ENCODE measurements at regions of chr3 and their contacts with region 1.

Region 1: DNA sequence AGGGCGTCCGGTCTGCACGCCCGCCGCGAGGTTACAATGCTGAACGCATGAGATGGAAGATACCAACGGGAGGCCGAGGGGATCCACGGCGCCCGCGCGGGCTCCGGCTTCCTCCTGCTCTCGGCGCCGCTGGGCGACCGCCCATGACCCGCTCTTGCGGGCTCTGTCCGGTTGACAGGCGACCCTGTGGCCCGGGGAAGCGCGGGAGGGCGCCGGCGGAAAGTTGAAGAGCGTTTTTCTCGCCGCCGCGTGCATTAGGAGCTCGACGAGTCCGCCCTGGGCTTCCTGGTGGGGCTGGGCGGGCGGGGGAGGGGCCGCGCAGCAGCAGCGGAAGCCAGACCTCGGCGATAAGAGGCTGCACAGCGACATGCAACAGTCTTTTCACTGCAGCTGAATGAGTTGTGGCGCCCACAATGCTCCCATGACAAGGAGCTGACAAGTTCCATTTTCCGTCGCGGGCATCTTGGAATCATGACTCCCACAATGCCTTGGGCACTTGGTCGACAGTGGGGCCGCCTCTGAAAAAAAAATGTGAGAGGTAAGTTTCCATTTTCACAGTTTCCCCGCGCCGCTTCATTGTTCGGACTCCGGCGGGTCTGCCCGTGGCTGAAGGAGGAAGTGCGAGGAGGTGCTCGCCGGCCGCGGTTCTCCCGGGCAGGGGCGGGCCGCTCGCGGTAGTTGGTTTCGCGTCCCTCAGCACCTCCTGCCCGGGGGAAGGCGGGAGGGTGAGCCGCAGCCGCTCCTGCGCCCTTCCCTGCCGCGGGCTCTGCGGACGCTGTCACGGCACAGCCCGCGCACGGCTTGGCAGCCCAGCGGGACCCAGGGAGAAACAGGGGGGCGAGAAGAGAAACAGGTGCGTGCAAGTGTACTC is at the start of gene MBNL1:
- DNase-seq: peak; percentile 82 to 85
- ATAC-seq: peak; percentile 72 to 89 (median 80)
- H3K4me3 ChIP-seq: peak within 1 kb of the TSS; percentile 66 to 97 (median 81)
- H3K27ac ChIP-seq: peak within 1 kb of the TSS; percentile 95 to 100 (median 98)
- H3K4me1 ChIP-seq: peaks cover 9 to 74% (median 57%) of the 10 kb centered on the region in 9 donors
- H3K27me3 ChIP-seq: no peaks in the 10 kb centered on the region
- CTCF ChIP-seq: peak in 1 of 9 donors; percentile 13
- total RNA-seq, gene MBNL1: 173 to 236 (median 190) TPM

Region 2: DNA sequence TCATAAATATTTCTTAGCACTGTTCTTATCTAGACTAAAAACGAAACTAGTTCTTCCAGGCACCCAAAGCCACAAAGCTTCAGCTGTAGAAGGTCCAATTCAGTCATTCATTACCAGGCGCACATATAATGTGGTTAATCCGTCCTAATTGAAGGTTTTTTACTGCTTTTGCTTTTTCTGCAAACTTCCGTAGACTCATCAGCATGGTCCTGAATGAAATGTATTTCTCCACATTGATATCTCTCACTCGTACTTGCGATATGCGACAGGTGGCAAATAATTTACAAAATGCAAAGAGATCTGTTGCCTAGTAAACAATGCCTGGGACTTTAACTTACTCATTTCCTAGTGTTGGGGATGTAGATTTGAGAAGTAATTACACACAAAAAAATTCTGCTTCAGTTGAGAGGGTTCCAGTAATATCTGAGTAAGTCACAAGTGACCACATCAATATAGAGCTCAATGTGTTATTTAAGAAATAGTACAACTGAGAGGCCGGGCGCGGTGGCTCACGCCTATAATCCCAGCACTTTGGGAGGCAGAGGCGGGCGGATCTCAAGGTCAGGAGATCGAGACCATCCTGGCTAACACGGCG is 75.0 kb before region 1 on chr3:
- intact Hi-C with region 1: loop called in 2 of 10 experiments (anchors 5 to 10 kb)
- DNase-seq: no peak
- ATAC-seq: peak in 1 of 8 donors; percentile 33
- H3K4me3 ChIP-seq: peak overlapping the region in 1 of 10 donors; percentile 34
- H3K27ac ChIP-seq: peak overlapping the region in 1 of 10 donors; percentile 74
- H3K4me1 ChIP-seq: peaks cover 0 to 62% (median 8%) of the 10 kb centered on the region in 9 donors
- H3K27me3 ChIP-seq: no peaks in the 10 kb centered on the region
- CTCF ChIP-seq: no peak

Region 3: GRCh38 chr3:152302521-152303021 is 33.8 kb after region 1 on chr3:
- intact Hi-C with region 1: loop called in 3 of 10 experiments (anchors 1 to 5 kb)
- DNase-seq: peak; percentile 30 to 68
- ATAC-seq: peak; percentile 36 to 84 (median 72)
- H3K4me3 ChIP-seq: peak overlapping the region in 9 of 10 donors; percentile 2 to 52 (median 49)
- H3K27ac ChIP-seq: peak overlapping the region; percentile 68 to 89 (median 86)
- H3K4me1 ChIP-seq: peaks cover 7 to 98% (median 91%) of the 10 kb centered on the region in 9 donors
- H3K27me3 ChIP-seq: no peaks in the 10 kb centered on the region
- CTCF ChIP-seq: no peak

Region 4: DNA sequence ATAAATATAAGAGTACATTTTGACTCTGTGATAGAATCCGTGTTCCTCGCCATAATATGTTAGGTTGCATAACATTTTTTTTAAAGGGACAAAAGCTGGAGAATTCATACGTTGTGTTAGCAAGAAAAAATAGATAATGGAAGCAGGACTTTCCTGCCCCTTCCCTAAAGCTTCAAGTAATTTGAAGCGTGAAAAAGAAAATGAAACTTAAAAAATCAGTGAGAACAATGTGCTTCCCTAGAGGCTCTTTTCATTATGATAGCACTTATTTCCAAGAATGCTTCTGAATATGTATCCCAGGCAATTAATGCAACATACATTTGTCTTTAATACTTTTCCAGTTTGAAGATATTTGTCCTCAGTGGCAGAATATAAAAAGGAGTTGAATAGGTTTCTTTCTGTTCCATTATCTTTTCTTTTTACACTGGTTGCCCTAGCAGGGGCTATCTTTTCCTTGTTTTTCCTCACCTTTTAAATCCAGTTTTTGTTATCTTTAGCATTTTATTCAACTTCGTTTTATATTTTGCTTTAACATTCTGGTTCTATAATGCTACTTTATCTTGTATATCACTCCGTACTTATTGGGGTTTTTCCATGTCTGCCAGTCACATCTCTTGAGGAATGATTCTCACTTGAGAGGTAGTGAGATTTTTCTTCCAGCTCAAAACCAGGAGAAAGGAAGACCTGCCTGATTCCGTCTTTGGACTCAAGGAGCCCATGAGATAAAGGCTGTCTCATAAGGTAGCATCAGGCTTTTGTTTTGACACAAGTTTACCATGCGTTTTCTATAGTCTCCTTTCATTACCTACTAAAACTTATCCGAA is 113.7 kb after region 1 on chr3:
- intact Hi-C with region 1: loop called in 1 of 10 experiments (anchors 2 kb)
- DNase-seq: no peak
- ATAC-seq: peak in 7 of 8 donors; percentile 15 to 51 (median 32)
- H3K4me3 ChIP-seq: peak overlapping the region in 9 of 10 donors; percentile 3 to 51 (median 39)
- H3K27ac ChIP-seq: peak overlapping the region; percentile 1 to 86 (median 73)
- H3K4me1 ChIP-seq: peaks cover 5 to 99% (median 89%) of the 10 kb centered on the region in 9 donors
- H3K27me3 ChIP-seq: no peaks in the 10 kb centered on the region
- CTCF ChIP-seq: no peak

Region 5: DNA sequence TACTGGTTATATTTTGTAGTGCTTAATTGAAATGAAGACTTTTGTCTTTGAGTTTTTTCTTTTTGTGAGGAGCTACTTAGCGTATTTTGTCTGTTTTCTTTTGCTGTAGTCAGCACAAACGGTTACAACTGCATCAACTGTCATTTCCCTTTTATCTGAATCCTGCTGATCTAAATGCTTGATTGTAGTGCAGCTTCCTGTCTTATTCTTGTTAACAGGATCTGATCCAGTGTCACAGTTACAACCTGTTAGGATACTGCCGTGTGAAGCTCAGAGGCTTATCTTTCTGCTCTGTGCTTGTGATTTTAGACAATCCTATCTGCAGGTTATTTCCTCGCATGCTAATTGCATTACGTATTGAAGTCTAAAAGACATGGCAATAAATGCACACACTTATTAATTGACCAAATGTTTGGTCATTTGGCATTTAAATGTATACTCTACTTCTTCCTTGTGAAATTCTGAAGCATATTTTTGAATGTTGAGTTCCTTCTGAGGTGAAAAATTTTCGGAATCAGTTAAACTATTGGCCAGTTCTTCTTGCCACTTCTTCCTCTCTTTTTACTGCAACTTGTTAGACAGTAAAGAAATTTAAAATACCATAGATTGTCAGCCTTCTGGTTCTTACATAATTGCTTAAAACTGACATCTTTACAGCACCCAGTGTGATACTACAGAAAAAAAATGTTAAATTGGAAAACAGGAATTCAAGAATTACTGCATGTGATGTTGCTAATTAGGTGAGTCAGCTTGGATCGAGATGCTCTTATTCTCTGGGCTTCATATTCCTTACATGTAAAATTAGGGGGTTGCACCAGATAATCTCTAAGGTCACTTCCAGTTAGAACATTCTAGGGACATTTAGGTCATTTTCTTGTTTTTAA is 168.2 kb after region 1 on chr3:
- intact Hi-C with region 1: loop called in 6 of 10 experiments (anchors 2 to 10 kb)
- DNase-seq: no peak
- ATAC-seq: peak; percentile 41 to 76 (median 62)
- H3K4me3 ChIP-seq: no peak overlapping the region
- H3K27ac ChIP-seq: peak overlapping the region in 8 of 10 donors; percentile 9 to 54 (median 35)
- H3K4me1 ChIP-seq: peaks cover 0 to 53% (median 45%) of the 10 kb centered on the region in 9 donors
- H3K27me3 ChIP-seq: no peaks in the 10 kb centered on the region
- CTCF ChIP-seq: no peak

Region 6: DNA sequence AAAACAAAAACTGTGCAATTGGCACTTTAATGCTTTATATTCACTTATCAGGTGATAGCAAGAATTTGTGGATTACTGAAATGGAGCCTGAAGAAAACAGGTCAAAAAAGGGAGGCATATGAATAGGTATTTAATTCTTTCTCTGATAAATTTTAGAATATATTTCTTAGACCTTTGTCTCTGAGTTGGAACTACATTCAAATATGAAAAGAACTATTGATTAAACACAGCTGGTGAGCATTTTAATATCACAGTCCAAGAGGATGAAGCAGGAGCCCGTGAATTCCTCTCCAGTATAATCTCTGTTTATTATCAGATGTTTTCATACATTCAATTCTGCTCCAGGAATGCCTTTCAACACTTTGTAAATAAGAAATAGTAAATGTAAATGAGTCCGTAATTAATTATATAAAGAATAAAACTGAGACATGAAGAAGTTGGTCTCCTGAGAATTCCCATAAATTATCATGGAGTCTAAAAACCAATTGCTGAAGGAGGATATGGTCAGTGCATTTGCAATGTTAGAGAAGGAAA is 1766.1 kb after region 1 on chr3:
- intact Hi-C with region 1: loop called in 1 of 10 experiments (anchors 10 kb)
- DNase-seq: no peak
- ATAC-seq: no peak
- H3K4me3 ChIP-seq: no peak overlapping the region
- H3K27ac ChIP-seq: no peak overlapping the region
- H3K4me1 ChIP-seq: no peaks in the 10 kb centered on the region
- H3K27me3 ChIP-seq: no peaks in the 10 kb centered on the region
- CTCF ChIP-seq: no peak

Measured in heart right ventricle (tissue), 16 donors.